CD4-positive, alpha-beta T cell (primary cell): ENCODE measurements at regions of chr14 and their contacts with region 1.

Region 1: GRCh38 chr14:24678801-24679247 is 44.8 kb upstream of the GZMB start:
- DNase-seq: peak; percentile 47 to 93 (median 72)
- ATAC-seq: peak; percentile 86
- H3K4me3 ChIP-seq: peak overlapping the region; percentile 25
- H3K4me3 Mint-ChIP-seq: peak overlapping the region; percentile 76
- H3K27ac ChIP-seq: no peak overlapping the region
- H3K27ac Mint-ChIP-seq: peak overlapping the region; percentile 72
- H3K4me1 ChIP-seq: peaks cover 21% of the 10 kb centered on the region
- H3K4me1 Mint-ChIP-seq: peaks cover 47% of the 10 kb centered on the region
- H3K27me3 ChIP-seq: no peaks in the 10 kb centered on the region
- H3K27me3 Mint-ChIP-seq: no peaks in the 10 kb centered on the region
- CTCF ChIP-seq: peak; percentile 100

Region 2: DNA sequence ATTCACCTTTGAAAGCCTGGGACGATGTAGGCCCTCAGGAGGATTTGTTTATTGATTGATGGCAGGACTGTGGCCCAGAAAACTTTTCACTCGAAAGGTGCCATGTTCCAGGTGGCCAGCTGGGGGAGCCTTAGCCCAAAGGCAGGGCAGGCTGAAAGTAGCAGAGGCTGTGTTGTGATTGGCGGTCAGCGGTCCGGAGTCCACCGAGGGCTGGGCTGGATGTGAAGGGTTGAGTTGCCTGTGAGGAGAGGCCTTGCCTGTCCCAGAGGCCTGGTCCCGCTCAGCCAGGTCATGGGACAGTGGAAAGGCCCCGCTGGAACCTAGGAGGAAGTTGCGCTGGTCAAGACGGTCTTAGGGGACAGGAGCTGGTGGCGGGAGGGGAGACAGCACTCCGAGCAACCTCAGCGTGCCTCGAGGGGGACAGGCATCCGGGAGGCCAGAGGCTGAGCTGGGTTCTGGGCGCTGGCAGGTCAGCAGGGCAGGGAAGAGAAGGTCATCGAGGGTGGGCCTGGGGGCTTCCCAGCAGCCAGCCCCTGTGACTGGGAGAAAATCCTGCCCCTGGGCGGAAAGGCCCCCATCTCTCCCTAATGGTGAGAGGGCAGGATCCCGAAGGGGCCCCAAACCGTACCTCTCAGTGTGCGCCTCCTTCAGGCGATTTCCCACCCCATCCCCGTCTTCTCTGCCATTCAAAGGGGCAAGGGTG is 197.1 kb before region 1 on chr14:
- CTCF ChIA-PET with region 1: no interaction called
- POLR2A ChIA-PET with region 1: no interaction called
- intact Hi-C with region 1: loop called (anchors 5 to 10 kb)
- DNase-seq: peak in 13 of 14 experiments; percentile 13 to 59 (median 33)
- ATAC-seq: peak; percentile 44
- H3K4me3 ChIP-seq: peak overlapping the region; percentile 16
- H3K4me3 Mint-ChIP-seq: peak overlapping the region; percentile 49
- H3K27ac ChIP-seq: no peak overlapping the region
- H3K27ac Mint-ChIP-seq: peak overlapping the region; percentile 30
- H3K4me1 ChIP-seq: peaks cover 14% of the 10 kb centered on the region
- H3K4me1 Mint-ChIP-seq: peaks cover 19% of the 10 kb centered on the region
- H3K27me3 ChIP-seq: no peaks in the 10 kb centered on the region
- H3K27me3 Mint-ChIP-seq: no peaks in the 10 kb centered on the region
- CTCF ChIP-seq: peak; percentile 68

Region 3: DNA sequence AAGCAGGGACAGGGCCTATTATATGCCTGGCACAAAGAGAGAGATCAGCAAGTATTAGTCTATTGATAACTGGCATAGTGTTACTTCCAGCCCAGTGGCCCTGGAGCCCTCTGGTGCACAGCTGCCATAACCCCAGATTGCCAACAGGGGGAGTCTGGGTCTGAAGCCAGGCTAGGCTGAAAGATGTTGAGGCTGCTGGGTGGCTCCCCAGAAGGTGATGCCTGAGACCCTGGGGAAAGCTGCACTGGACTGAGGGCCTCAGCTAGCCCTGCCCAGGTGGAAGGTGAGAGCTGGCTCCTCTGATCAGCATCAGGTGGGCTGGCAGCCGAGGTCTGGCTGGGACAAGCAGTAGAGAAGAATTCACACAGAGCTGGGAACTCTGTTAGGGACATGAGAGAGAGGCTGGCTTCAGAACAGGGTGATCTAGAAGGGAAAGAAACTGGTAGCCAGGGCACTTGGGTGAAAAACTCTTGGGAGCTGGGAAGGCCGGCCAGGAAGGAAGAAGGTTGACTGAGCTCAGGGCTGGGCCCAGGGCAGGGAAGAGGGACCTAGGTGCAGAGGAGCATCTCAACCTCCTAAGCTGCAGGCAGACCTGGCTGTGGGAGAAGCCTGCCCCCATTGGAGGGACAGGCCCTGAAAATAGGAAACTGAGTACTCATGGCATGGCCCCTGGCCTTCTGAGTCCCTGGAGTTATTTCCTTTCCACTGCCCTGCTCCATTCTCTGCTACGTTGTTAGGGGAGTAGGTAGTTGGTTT is 73.2 kb before region 1 on chr14:
- CTCF ChIA-PET with region 1: interaction called, 9 read pairs
- POLR2A ChIA-PET with region 1: interaction called, 3 read pairs
- intact Hi-C with region 1: loop called (anchors 1 kb)
- DNase-seq: peak; percentile 21 to 72 (median 54)
- ATAC-seq: peak; percentile 71
- H3K4me3 ChIP-seq: no peak overlapping the region
- H3K4me3 Mint-ChIP-seq: no peak overlapping the region
- H3K27ac ChIP-seq: no peak overlapping the region
- H3K27ac Mint-ChIP-seq: no peak overlapping the region
- H3K4me1 ChIP-seq: peaks cover 19% of the 10 kb centered on the region
- H3K4me1 Mint-ChIP-seq: peaks cover 4% of the 10 kb centered on the region
- H3K27me3 ChIP-seq: peaks cover 0 to 5% of the 10 kb centered on the region in 2 experiments
- H3K27me3 Mint-ChIP-seq: peaks cover 19% of the 10 kb centered on the region
- CTCF ChIP-seq: peak; percentile 86